Left ventricle myocardium superior (tissue), 1 donor: ENCODE measurements at regions of chr6 and their contacts with region 1.

Region 1: GRCh38 chr6:71510057-71510713 is 221.6 kb downstream of the OGFRL1 start:
- DNase-seq: no peak
- ATAC-seq: peak; percentile 81

Region 2: GRCh38 chr6:70336996-70337742 is 1173.0 kb before region 1 on chr6:
- intact Hi-C with region 1: no loop called
- DNase-seq: no peak
- ATAC-seq: no peak

Region 3: DNA sequence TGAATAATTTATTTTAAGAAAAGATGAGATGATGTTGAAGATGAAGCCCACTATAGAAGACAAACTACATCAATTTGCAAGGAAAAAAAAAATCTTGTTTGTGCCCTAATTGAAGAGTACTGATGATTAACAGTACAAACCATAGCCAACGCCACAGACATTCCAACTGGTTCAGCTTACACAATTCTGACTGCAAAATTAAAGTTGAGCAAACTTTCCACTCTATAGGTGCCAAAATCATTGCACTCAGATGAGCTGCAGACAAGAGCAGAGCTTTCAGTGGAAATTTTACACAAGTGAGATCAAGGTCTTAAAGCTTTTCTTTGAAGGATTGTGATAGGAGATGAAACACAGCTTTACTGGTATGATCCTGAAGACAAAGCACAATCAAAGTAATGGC is 136.2 kb before region 1 on chr6:
- intact Hi-C with region 1: no loop called
- DNase-seq: no peak
- ATAC-seq: no peak

Region 4: GRCh38 chr6:71383901-71384489 is 126.2 kb before region 1 on chr6:
- intact Hi-C with region 1: loop called (anchors 2 kb)
- DNase-seq: no peak
- ATAC-seq: no peak

Region 5: GRCh38 chr6:71706523-71706922 is 196.3 kb after region 1 on chr6:
- intact Hi-C with region 1: no loop called
- DNase-seq: no peak
- ATAC-seq: no peak